ENCODE measurements at regions of chr1 and their contacts with region 1.

Region 1: GRCh38 chr1:38997034-38997900 is 6.2 kb downstream of the AKIRIN1 start:
- DNase-seq: no peak
- H3K4me3 ChIP-seq: peak overlapping the region in 1 of 4 experiments; percentile 32; a peak in 2 of 8 replicates
- H3K27ac ChIP-seq: no peak overlapping the region; the same call in 1 of the 2 replicates
- H3K4me1 ChIP-seq: peaks cover 0 to 30% (median 16%) of the 10 kb centered on the region in 4 experiments
- H3K27me3 ChIP-seq: no peaks in the 10 kb centered on the region
- CTCF ChIP-seq: no peak
- EP300 ChIP-seq: no peak
- POLR2A ChIP-seq: no peak; a peak in 1 of 3 replicates
- RAD21 ChIP-seq: no peak

Region 2: DNA sequence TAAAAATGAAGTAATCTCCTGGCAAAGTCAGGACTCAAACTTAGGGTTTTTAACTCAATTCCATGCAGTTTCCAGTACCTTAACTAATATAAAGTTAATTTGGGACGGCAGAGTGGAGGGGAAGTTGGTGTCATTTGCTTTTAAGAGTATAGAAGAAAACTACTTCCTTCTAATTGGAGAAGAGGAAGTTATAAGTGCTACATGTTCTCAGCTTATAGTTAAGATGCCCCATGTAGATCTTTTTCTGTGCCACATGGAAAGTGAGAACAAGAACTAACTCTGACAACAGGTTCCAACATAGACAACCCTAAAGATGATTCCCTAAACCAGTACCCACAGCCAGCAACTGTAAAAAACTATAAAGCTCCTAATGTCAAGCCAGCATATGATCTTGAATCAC is 149.2 kb before region 1 on chr1:
- CTCF ChIA-PET with region 1: no interaction called
- POLR2A ChIA-PET with region 1: no interaction called
- DNase-seq: no peak
- H3K4me3 ChIP-seq: no peak overlapping the region
- H3K27ac ChIP-seq: no peak overlapping the region
- H3K4me1 ChIP-seq: no peaks in the 10 kb centered on the region
- H3K27me3 ChIP-seq: no peaks in the 10 kb centered on the region
- CTCF ChIP-seq: no peak
- EP300 ChIP-seq: no peak
- POLR2A ChIP-seq: no peak
- RAD21 ChIP-seq: no peak

Region 3: DNA sequence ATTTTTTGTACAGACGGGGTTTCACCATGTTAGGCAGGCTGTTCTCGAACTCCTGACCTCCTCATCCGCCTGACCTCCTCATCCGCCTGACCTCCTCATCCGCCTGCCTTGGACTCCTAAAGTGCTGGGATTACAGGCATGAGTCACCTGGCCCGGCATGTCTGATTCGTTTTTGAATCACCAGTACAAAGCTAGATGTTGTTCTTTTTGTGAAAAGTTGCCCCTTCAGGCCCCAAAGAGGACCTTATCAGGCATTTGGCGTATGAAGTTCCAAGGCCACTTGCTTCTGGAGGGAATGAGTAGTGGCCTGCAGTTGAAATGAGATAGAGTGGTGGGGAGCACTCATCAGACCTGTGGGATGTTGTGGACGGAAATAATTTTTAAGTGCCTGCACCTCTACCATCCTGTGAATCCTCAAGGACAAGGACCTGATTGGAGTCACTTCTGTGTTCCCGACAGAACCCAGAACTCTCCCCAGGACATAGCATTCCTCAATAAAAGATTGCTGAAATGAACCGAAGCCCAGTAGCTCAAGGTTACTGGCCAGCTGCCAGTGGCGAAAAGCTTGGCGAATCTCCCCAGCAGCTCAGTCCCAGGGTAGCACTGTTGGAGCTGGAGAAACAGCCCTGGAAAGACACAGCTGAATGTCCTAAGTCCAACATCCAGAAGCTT is 79.0 kb after region 1 on chr1:
- CTCF ChIA-PET with region 1: interaction called, 3 read pairs
- POLR2A ChIA-PET with region 1: interaction called, 11 read pairs
- DNase-seq: no peak
- H3K4me3 ChIP-seq: no peak overlapping the region
- H3K27ac ChIP-seq: no peak overlapping the region
- H3K4me1 ChIP-seq: no peaks in the 10 kb centered on the region
- H3K27me3 ChIP-seq: 0 out of 7 replicates have a peak, but pooled peaks cover 0 to 2% (median 0%) of the 10 kb centered on the region in 4 experiments
- CTCF ChIP-seq: no peak
- EP300 ChIP-seq: no peak
- POLR2A ChIP-seq: no peak
- RAD21 ChIP-seq: no peak

Region 4: GRCh38 chr1:39116868-39117728 is 119.8 kb after region 1 on chr1:
- CTCF ChIA-PET with region 1: no interaction called
- POLR2A ChIA-PET with region 1: no interaction called
- DNase-seq: no peak
- H3K4me3 ChIP-seq: no peak overlapping the region
- H3K27ac ChIP-seq: no peak overlapping the region
- H3K4me1 ChIP-seq: peaks cover 0 to 3% (median 2%) of the 10 kb centered on the region in 4 experiments; a peak in 5 of 7 replicates
- H3K27me3 ChIP-seq: no peaks in the 10 kb centered on the region
- CTCF ChIP-seq: no peak
- EP300 ChIP-seq: no peak
- POLR2A ChIP-seq: no peak
- RAD21 ChIP-seq: no peak

Measured in H1 (cell line).